Ovary (tissue), 10 donors: ENCODE measurements at regions of chr2 and their contacts with region 1.

Region 1: DNA sequence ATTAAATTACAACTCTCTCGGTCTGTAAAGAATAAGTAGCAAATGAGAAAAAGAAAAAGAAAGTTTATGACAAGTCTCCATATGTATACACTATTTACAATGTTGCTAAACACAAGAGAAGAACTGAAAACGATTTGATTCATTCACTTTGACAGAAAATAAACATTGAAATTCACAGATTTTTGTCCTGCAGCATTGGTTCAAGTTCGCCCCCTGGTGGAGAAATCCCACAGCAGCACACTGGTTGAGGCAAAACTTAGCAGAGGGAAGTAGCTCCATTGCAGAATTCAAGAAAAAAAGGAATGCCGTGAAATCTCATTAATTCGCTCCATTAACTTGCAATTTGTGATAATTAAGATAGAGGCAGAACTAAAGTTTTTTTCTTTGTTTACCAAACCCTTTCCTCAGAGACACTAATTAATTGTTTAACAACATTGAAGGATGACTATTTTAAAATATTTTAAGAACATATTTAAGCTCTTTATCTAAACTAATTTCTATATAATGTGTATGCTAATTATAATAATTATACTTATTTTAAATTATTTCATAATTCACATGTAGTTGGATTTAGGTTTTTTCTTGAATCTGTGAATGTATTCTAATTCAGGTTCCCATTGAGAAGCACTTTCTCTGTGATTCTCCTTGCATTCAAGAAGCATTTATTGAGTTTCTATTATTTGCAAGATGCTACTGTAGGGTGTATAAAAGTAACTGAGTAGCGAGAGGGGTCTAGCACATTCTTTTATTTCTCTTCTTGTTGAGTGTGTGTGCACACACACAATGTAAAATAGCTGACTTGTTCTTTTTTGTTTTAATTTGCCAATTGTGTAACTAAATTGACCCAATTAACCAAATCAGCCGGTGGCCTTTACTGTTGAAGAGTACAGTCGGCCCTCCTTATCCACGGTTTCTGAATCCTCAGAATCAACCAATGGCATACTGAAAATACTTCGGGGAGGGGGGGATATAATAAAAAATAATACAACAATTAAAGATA is 74.1 kb downstream of the COL4A3 start:
- DNase-seq: peak; percentile 68 to 84 (median 80)
- H3K4me3 ChIP-seq: no peak overlapping the region
- H3K27ac ChIP-seq: no peak overlapping the region
- H3K4me1 ChIP-seq: peaks cover under 1% of the 10 kb centered on the region
- H3K27me3 ChIP-seq: no peaks in the 10 kb centered on the region
- CTCF ChIP-seq: peak; percentile 72 to 91 (median 73)
- EP300 ChIP-seq: no peak
- POLR2A ChIP-seq: no peak

Region 2: GRCh38 chr2:226943862-226944620 is 294.5 kb before region 1 on chr2:
- intact Hi-C with region 1: no loop called
- DNase-seq: no peak
- H3K4me3 ChIP-seq: no peak overlapping the region
- H3K27ac ChIP-seq: no peak overlapping the region
- H3K4me1 ChIP-seq: no peaks in the 10 kb centered on the region
- H3K27me3 ChIP-seq: no peaks in the 10 kb centered on the region
- CTCF ChIP-seq: no peak
- EP300 ChIP-seq: no peak
- POLR2A ChIP-seq: no peak

Region 3: DNA sequence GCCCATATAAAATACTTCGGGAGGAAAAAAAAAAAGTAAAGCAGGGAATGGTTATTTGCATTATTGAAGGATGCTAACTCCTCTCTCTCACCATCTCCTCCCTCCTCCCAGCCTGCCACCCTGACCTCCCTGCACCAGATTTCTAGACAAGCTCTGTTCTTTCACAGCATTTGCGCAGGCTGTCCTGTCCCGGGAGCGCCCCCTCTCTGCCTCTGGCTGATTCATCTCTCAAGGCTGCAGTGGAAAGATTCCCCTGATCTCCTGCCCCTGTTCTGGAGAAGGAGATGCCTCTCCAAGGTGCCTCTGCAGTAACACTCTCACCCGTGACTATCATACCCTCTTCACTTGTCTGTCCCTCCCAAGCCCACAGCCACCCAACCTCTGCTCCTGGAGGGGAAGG is 113.0 kb before region 1 on chr2:
- intact Hi-C with region 1: loop called in 3 of 4 experiments (anchors 2 to 5 kb)
- DNase-seq: no peak
- H3K4me3 ChIP-seq: no peak overlapping the region
- H3K27ac ChIP-seq: no peak overlapping the region
- H3K4me1 ChIP-seq: no peaks in the 10 kb centered on the region
- H3K27me3 ChIP-seq: no peaks in the 10 kb centered on the region
- CTCF ChIP-seq: no peak
- EP300 ChIP-seq: no peak
- POLR2A ChIP-seq: no peak

Region 4: GRCh38 chr2:227132986-227133385 is 105.6 kb before region 1 on chr2:
- intact Hi-C with region 1: loop called in 3 of 4 experiments (anchors 2 to 5 kb)
- DNase-seq: no peak
- H3K4me3 ChIP-seq: no peak overlapping the region
- H3K27ac ChIP-seq: no peak overlapping the region
- H3K4me1 ChIP-seq: peaks cover 4% of the 10 kb centered on the region
- H3K27me3 ChIP-seq: no peaks in the 10 kb centered on the region
- CTCF ChIP-seq: no peak
- EP300 ChIP-seq: no peak
- POLR2A ChIP-seq: no peak

Region 5: DNA sequence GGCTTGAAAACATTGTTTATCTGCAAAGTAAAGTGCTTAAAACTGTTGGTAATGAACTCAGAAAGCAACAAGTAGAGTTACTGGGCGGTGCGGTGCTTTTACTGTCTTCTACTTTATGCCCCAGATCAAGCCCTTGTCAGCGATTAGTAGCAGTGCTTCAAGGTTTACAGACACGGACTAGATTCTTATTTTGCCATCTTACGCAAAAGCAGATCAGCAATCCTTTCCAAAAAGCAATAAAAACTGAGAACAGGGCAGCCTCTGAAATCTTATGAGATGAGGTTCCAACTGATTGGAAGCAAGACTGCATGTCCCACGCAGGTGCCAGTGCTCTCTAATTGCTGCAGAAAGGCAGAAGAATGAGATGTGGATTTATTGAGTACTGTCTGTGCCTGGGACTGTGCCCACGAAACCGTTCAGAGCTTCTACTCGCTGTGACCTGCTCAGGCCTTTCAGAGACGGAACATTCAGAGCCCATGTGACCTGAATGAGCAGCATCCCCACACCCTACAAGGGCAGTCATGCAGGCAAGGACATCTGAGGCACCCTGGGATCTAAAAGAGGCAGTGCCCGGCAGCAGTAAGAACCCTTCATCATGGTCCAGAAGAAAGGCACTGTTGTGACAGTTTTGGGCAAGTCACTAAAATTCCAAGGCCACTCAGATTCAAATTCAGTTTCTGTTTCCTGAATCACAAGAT is 58.4 kb before region 1 on chr2:
- intact Hi-C with region 1: no loop called
- DNase-seq: peak; percentile 25 to 66 (median 42)
- H3K4me3 ChIP-seq: no peak overlapping the region
- H3K27ac ChIP-seq: peak overlapping the region in 1 of 2 donors; percentile 39
- H3K4me1 ChIP-seq: peaks cover 5% of the 10 kb centered on the region
- H3K27me3 ChIP-seq: no peaks in the 10 kb centered on the region
- CTCF ChIP-seq: no peak
- EP300 ChIP-seq: no peak
- POLR2A ChIP-seq: no peak

Region 6: DNA sequence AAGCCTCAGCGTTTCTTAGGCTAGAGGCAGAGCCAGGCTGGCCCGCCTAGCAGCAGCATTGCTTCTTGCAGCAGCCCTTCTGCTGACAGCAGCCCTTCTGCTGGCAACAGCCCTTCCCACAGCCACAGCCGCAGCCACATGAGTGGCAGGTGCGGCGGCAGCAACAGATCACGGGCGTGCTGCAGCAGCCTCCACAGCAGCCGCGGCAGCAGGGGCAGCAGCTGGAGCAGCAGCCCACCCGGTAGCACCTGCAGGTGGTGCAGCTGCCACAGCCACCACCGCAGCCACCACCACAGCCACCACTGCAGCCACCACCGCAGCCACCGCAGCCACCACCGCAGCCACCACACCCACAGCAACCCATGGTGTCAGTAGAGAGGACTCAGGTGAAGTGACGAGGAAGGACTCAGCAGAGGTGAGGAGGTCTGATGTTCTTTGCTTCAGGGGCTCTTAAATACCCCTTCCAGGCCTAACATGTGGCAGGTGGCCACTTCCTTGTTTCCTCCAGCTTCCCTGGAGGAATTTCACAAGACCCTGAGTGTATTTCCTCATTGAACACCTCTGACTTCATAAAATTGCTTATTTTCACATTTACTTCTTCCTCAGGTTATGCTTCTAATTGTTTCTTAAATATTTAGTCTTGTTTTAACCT is 486.0 kb after region 1 on chr2 and contains the start of gene SCYGR6:
- intact Hi-C with region 1: no loop called
- DNase-seq: no peak
- H3K4me3 ChIP-seq: no peak within 1 kb of the TSS
- H3K27ac ChIP-seq: no peak within 1 kb of the TSS
- H3K4me1 ChIP-seq: no peaks in the 10 kb centered on the region
- H3K27me3 ChIP-seq: no peaks in the 10 kb centered on the region
- CTCF ChIP-seq: no peak
- EP300 ChIP-seq: no peak
- POLR2A ChIP-seq: no peak
- total RNA-seq, gene SCYGR6: not detected